ENCODE measurements at regions of chr1 and their contacts with region 1.

Region 1: DNA sequence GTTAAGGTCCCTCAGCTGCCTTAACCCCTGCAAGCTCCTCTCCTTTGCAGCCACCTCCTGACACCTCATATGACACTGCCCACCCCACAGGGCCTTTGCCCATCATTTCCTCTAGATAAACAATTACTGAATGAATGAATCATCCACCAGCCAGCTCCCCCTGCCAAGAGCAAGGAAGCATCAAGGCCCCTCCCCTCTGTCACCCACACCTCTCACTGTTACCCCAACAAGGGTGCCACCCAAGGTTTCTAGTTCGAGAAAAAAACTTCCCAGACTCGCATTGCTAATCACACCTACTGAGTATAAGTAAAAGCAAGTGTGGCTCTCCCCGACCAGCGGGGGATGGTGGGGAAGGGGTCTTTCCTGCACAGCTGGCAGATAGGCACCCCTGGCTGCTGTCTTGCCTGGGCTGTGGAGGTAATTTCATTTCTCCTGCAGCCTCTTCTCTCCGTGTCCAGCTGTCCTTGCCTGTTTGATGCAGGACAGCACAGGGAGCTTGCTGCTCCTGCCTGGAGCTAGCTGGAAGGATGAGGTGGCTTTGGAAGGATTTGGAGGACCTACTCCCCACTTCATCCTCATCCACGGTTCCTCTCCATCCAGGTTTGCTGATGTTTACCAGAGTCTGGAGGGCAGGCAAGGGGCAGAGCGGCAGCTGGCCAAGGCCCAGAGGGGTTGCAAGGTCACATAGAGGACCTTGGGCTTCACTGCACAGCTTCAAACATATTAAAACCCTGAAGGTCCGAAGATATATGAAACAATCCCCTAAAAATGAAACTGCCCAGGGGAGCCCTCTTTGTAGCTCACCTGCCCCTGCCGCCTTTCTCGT is 33.1 kb upstream of the LBR start:
- DNase-seq: peak; percentile 29
- ATAC-seq: peak; percentile 69
- H3K4me3 Mint-ChIP-seq: no peak overlapping the region
- H3K27ac Mint-ChIP-seq: peak overlapping the region; percentile 15
- H3K4me1 Mint-ChIP-seq: peaks cover 21% of the 10 kb centered on the region
- H3K27me3 Mint-ChIP-seq: no peaks in the 10 kb centered on the region

Region 2: GRCh38 chr1:225428068-225428880 is 32.7 kb before region 1 on chr1:
- POLR2A ChIA-PET with region 1: interaction called, 11 read pairs
- DNase-seq: peak; percentile 94
- ATAC-seq: peak; percentile 93
- H3K4me3 Mint-ChIP-seq: peak overlapping the region; percentile 87
- H3K27ac Mint-ChIP-seq: peak overlapping the region; percentile 89
- H3K4me1 Mint-ChIP-seq: peaks cover 43% of the 10 kb centered on the region
- H3K27me3 Mint-ChIP-seq: peaks cover 2% of the 10 kb centered on the region